ENCODE measurements at regions of chr6 and their contacts with region 1.

Region 1: GRCh38 chr6:27672113-27672799 is 199.4 kb upstream of the ZNF184 start:
- DNase-seq: no peak
- H3K4me3 ChIP-seq: peak overlapping the region in 21 of 59 donors; percentile 1 to 59 (median 11)
- H3K27ac ChIP-seq: no peak overlapping the region
- H3K27me3 ChIP-seq: peaks cover 4 to 100% (median 88%) of the 10 kb centered on the region in 45 donors
- CTCF ChIP-seq: no peak

Region 2: GRCh38 chr6:27582928-27583725 is 89.1 kb before region 1 on chr6:
- intact Hi-C with region 1: no loop called
- DNase-seq: peak in 1 of 10 donors; percentile 33
- H3K4me3 ChIP-seq: peak overlapping the region in 1 of 59 donors; percentile 12
- H3K27ac ChIP-seq: no peak overlapping the region
- H3K27me3 ChIP-seq: peaks cover 0 to 98% (median 57%) of the 10 kb centered on the region in 45 donors
- CTCF ChIP-seq: no peak

Region 3: GRCh38 chr6:27687154-27688013 is 15.1 kb after region 1 on chr6:
- intact Hi-C with region 1: loop called in 1 of 2 experiments (anchors 1 kb)
- DNase-seq: peak; percentile 60 to 90 (median 82)
- H3K4me3 ChIP-seq: peak overlapping the region; percentile 39 to 81 (median 62)
- H3K27ac ChIP-seq: peak overlapping the region in 50 of 59 donors; percentile 9 to 85 (median 64)
- H3K27me3 ChIP-seq: peaks cover 0 to 11% (median 4%) of the 10 kb centered on the region in 45 donors
- CTCF ChIP-seq: peak in 53 of 56 donors; percentile 25 to 68 (median 49)

Region 4: DNA sequence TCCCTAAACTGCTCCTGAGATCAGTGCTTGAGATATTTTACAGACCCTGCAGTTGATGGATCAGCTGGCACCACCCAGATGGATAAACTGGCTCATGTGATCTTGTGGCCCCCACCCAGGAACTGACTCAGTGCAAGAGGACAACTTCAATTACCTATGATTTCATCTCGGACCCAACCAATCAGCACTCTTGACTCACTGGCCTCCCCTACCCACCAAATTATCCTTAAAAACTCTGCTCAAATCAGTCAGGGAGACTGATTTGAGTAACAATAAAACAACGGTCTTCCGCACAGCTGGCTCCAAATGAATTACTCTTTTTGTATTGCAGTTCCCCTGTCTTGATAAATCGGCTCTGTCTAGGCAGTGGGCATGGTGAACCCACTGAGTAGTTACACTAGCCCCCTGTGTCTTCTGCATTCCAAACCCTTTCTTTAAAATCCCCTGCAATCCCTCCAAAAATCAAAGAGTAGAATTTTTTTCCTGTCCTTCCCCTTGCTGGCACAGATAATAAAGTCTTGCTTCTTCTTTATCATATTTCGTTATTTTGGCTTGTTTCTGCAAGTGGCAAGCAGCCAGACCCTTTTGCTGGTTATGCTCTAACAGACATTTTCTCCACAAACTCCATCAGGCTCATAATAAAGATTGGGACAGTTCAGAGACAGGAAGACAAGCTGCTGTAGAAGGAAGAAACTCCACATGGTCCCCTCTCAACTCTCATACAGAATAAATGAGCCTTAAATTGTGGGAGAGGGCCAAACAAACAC is 333.1 kb after region 1 on chr6:
- intact Hi-C with region 1: no loop called
- DNase-seq: no peak
- H3K4me3 ChIP-seq: no peak overlapping the region
- H3K27ac ChIP-seq: no peak overlapping the region
- H3K27me3 ChIP-seq: peaks cover 0 to 11% (median 0%) of the 10 kb centered on the region in 45 donors
- CTCF ChIP-seq: no peak